Tibial artery (tissue), 4 donors: ENCODE measurements at regions of chr15 and their contacts with region 1.

Region 1: DNA sequence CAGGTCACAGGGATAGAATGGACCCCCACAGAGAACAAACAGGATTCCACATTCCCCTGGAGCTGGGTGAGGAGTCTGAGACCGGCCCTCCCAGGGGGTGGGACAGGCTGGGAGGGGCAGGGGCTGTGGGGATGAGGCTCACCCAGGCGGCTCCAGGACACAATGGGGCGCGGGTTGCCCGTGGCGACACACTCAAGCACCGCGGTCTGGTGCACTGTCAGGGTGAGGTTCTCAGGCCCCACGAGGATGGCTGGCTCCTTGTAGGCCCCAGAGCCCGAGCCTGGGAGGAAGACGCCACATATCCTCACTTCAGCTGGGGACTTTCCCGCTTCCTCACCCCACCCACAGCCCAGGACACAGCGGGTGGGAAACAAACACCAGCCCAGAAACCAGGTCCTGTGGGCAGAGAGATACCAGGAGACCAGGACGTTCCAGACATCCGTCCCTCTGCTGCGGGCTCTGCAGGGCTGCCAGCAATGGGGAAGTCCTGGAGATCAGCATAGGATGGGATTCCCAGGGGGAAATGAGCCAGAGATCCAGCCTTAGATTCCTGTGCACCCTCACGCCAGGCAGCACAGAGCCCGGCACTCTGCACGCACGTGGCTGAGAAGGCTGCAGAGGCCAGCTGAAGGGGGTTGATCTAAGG is 30.2 kb downstream of the RNU5B-1 start:
- DNase-seq: no peak
- H3K4me3 ChIP-seq: no peak overlapping the region
- H3K27ac ChIP-seq: no peak overlapping the region
- H3K4me1 ChIP-seq: no peaks in the 10 kb centered on the region
- H3K27me3 ChIP-seq: peaks cover 0 to 67% of the 10 kb centered on the region in 2 donors
- CTCF ChIP-seq: no peak

Region 2: GRCh38 chr15:65318870-65319356 is 15.8 kb before region 1 on chr15:
- intact Hi-C with region 1: no loop called
- DNase-seq: peak; percentile 65 to 84
- H3K4me3 ChIP-seq: no peak overlapping the region
- H3K27ac ChIP-seq: no peak overlapping the region
- H3K4me1 ChIP-seq: no peaks in the 10 kb centered on the region
- H3K27me3 ChIP-seq: peaks cover 0 to 25% of the 10 kb centered on the region in 2 donors
- CTCF ChIP-seq: peak; percentile 89 to 95

Region 3: DNA sequence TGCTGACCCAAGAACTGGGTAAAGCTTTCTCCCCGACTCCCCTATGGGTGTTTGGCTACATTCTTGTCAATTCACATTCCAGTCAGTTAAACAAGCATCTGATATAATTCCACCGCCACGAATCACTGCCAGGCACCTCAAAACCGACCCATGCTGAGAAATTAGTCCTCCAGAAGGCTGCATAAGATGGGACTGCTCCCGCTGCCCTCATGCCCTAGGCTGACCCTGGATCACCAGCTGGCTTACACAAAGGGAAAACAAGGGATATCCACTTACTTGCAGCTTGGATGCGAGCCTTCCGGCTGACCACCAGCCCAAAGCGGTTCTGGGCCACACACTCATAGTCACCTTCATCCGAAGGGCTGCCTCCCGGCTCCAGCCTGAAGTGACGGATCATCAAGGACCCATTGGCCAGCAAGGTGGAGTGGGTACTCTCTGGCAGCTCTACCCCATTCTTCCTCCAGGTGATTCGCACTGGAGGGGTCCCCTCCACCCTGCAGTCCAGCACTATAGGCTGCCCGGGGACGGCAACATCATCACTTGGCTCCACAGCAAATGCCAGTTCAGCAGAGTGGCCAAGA is 40.2 kb after region 1 on chr15:
- intact Hi-C with region 1: loop called (anchors 5 kb)
- DNase-seq: peak in 1 of 2 donors; percentile 24
- H3K4me3 ChIP-seq: no peak overlapping the region
- H3K27ac ChIP-seq: no peak overlapping the region
- H3K4me1 ChIP-seq: peaks cover 0 to 22% (median 18%) of the 10 kb centered on the region in 4 donors
- H3K27me3 ChIP-seq: peaks cover 0 to 77% of the 10 kb centered on the region in 2 donors
- CTCF ChIP-seq: no peak